ENCODE measurements at regions of chr1 and their contacts with region 1.

Region 1: GRCh38 chr1:87328272-87329050 is at the start of gene LMO4:
- DNase-seq: peak; percentile 98
- ATAC-seq: peak; percentile 81
- H3K4me3 ChIP-seq: peak within 1 kb of the TSS; percentile 82
- H3K27ac ChIP-seq: peak within 1 kb of the TSS; percentile 100
- H3K4me1 ChIP-seq: peaks cover 4% of the 10 kb centered on the region; the same call in 1 of the 2 replicates
- H3K27me3 ChIP-seq: no peaks in the 10 kb centered on the region
- CTCF ChIP-seq: no peak
- POLR2A ChIP-seq: peak; percentile 93
- RAD21 ChIP-seq: no peak
- total RNA-seq, gene LMO4: 85.8 and 98.9 TPM in 2 replicates

Region 2: DNA sequence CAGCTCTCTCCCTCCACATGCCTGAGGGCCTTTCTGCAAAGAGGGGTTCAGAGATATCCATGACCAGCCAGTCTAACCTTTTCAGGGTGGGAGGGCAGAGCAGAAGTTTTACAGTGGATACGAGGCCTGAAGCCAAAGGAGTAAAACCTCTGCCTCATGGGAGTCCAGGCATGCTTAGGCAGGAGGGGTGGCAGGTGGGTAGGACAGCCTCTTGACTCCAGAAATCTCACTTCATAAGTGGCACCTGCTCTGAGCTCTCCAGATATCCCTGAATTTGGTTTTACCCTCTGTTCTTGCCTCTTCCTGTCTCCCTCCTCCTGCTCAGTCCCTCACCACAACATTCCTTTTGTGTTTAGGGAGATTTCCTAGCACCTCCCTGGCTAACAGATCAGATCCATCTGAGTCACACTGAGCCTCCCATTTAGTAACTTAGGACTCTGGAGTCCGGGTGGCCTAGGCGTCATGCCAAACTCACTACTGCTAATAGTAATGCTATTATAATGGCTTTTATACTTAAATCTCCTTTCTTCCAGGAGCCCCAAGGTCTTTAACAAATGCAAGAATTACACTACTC is 213.1 kb before region 1 on chr1:
- CTCF ChIA-PET with region 1: no interaction called
- POLR2A ChIA-PET with region 1: no interaction called
- dilution Hi-C with region 1: no loop called
- in situ Hi-C with region 1: no loop called
- intact Hi-C with region 1: no loop called
- DNase-seq: peak; percentile 85
- ATAC-seq: peak; percentile 79
- H3K4me3 ChIP-seq: no peak overlapping the region
- H3K27ac ChIP-seq: no peak overlapping the region
- H3K4me1 ChIP-seq: peaks cover 8% of the 10 kb centered on the region
- H3K27me3 ChIP-seq: no peaks in the 10 kb centered on the region
- CTCF ChIP-seq: no peak
- POLR2A ChIP-seq: no peak
- RAD21 ChIP-seq: no peak

Region 3: GRCh38 chr1:87151500-87152421 is 176.7 kb before region 1 on chr1:
- CTCF ChIA-PET with region 1: interaction called, 3 read pairs
- POLR2A ChIA-PET with region 1: no interaction called
- dilution Hi-C with region 1: no loop called
- in situ Hi-C with region 1: loop called (anchors 5 kb)
- intact Hi-C with region 1: loop called (anchors 2 kb)
- DNase-seq: peak; percentile 58
- ATAC-seq: peak; percentile 93
- H3K4me3 ChIP-seq: peak overlapping the region; percentile 21; the same call in 1 of the 2 replicates
- H3K27ac ChIP-seq: peak overlapping the region; percentile 36
- H3K4me1 ChIP-seq: peaks cover 17% of the 10 kb centered on the region; the same call in 1 of the 2 replicates
- H3K27me3 ChIP-seq: peaks cover 2% of the 10 kb centered on the region; the same call in 1 of the 2 replicates
- CTCF ChIP-seq: peak; percentile 69
- POLR2A ChIP-seq: no peak
- RAD21 ChIP-seq: peak; percentile 77

Region 4: GRCh38 chr1:87279966-87280535 is 48.4 kb before region 1 on chr1:
- CTCF ChIA-PET with region 1: no interaction called
- POLR2A ChIA-PET with region 1: no interaction called
- dilution Hi-C with region 1: no loop called
- in situ Hi-C with region 1: no loop called
- intact Hi-C with region 1: no loop called
- DNase-seq: peak; percentile 16
- ATAC-seq: no peak
- H3K4me3 ChIP-seq: no peak overlapping the region
- H3K27ac ChIP-seq: no peak overlapping the region
- H3K4me1 ChIP-seq: peaks cover 5% of the 10 kb centered on the region
- H3K27me3 ChIP-seq: no peaks in the 10 kb centered on the region
- CTCF ChIP-seq: no peak
- POLR2A ChIP-seq: no peak
- RAD21 ChIP-seq: 0 out of 2 replicates have a peak, but pooled peaks have one; percentile 12

Region 5: DNA sequence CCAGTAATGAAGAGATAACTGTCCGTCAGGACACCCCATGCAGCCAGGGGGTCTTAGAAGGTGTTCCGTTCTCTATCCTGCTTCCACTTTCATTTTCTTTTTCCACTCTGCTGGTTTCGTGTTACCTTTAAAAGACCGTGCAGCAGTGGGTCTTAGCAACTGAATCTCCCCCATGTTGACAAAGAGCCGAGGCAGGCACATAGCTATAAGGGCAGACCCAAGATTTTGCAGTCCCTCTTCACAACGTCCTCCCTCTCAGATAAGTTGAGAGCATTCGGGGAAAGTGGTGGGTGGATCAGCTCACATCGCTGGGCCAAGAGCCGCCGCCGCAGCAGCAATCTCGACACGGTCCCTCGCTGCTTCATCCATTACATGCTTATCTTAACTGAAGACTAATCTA is 355.7 kb after region 1 on chr1:
- CTCF ChIA-PET with region 1: no interaction called
- POLR2A ChIA-PET with region 1: interaction called, 3 read pairs
- dilution Hi-C with region 1: no loop called
- in situ Hi-C with region 1: no loop called
- intact Hi-C with region 1: loop called (anchors 2 kb)
- DNase-seq: peak; percentile 57
- ATAC-seq: peak; percentile 56
- H3K4me3 ChIP-seq: peak overlapping the region; percentile 89
- H3K27ac ChIP-seq: peak overlapping the region; percentile 96
- H3K4me1 ChIP-seq: peaks cover 10% of the 10 kb centered on the region
- H3K27me3 ChIP-seq: no peaks in the 10 kb centered on the region
- CTCF ChIP-seq: no peak
- POLR2A ChIP-seq: no peak
- RAD21 ChIP-seq: no peak

Region 6: DNA sequence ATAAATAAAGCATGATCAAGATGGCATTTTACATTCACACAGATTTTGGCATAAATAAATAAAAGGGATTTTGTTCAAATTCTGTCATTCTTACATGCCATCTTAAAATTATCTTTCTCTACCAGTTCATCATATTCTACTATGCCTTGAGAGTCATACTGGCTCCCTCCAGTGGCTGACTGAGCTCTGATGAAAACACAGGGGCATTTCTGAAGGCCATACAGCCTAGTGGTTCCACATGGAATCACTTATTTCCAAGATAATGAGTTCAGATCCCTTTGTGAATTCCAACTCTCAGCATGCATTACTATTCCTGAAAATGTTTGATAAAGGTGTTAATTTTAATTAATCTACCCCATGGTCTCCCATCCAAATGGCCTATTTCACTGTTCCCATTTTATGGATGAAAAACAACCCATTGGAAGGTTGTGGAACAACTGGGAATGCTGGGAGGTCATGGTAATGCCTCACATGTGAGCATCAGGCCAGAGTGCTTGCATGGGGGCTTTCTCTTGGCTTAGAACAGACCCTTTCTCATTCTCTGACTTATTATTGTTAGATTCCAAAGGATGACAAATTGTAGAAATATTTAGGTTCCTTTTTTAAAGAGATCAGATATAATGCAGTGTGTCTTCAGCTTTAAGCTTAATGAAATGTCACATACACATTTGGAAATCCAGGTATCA is 733.2 kb after region 1 on chr1:
- CTCF ChIA-PET with region 1: interaction called, 4 read pairs
- POLR2A ChIA-PET with region 1: no interaction called
- dilution Hi-C with region 1: no loop called
- in situ Hi-C with region 1: no loop called
- intact Hi-C with region 1: loop called (anchors 1 kb)
- DNase-seq: peak; percentile 70
- ATAC-seq: peak; percentile 96
- H3K4me3 ChIP-seq: no peak overlapping the region
- H3K27ac ChIP-seq: no peak overlapping the region
- H3K4me1 ChIP-seq: no peaks in the 10 kb centered on the region
- H3K27me3 ChIP-seq: no peaks in the 10 kb centered on the region
- CTCF ChIP-seq: peak; percentile 96
- POLR2A ChIP-seq: no peak
- RAD21 ChIP-seq: peak; percentile 82

Region 7: DNA sequence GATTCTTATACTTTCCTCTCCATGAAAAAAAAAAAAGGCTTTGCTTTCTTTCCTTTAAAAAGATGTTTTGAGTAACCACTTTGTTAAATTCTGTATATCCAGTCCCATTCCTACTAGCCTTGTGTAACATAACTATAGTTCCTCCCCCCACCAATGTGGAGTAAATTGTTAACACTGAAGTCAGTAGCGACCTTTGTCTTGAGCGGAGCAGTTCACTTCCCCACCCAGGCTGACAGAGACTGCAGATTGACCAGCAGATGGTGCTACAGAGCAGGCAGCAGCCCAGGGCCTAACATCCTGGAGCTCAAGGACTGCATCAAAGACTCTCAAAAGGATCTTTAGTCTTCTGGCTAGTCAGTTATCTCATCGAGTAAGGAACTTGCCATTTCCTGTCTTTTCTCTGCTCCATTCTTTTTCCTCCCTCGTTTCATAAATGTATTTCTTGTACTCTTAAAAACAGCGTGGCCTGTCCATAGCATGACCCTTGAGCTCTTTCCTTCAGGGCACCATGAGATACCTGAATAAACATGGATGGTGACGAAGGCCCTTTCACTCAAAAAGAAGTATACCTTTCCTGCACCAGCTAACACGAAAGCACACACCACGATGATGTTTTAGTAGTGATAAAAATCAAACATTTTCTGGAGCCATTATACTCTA is 852.1 kb after region 1 on chr1:
- CTCF ChIA-PET with region 1: interaction called, 3 read pairs
- POLR2A ChIA-PET with region 1: no interaction called
- dilution Hi-C with region 1: no loop called
- in situ Hi-C with region 1: no loop called
- intact Hi-C with region 1: loop called (anchors 5 kb)
- DNase-seq: peak; percentile 79
- ATAC-seq: peak; percentile 100
- H3K4me3 ChIP-seq: no peak overlapping the region
- H3K27ac ChIP-seq: no peak overlapping the region
- H3K4me1 ChIP-seq: no peaks in the 10 kb centered on the region; the same call in 1 of the 2 replicates
- H3K27me3 ChIP-seq: no peaks in the 10 kb centered on the region
- CTCF ChIP-seq: peak; percentile 83
- POLR2A ChIP-seq: no peak
- RAD21 ChIP-seq: peak; percentile 76

Region 8: GRCh38 chr1:88595355-88596002 is 1267.0 kb after region 1 on chr1:
- CTCF ChIA-PET with region 1: no interaction called
- POLR2A ChIA-PET with region 1: no interaction called
- dilution Hi-C with region 1: no loop called
- in situ Hi-C with region 1: no loop called
- intact Hi-C with region 1: loop called (anchors 10 kb)
- DNase-seq: peak; percentile 57
- ATAC-seq: peak; percentile 68
- H3K4me3 ChIP-seq: no peak overlapping the region
- H3K27ac ChIP-seq: no peak overlapping the region
- H3K4me1 ChIP-seq: no peaks in the 10 kb centered on the region
- H3K27me3 ChIP-seq: no peaks in the 10 kb centered on the region
- CTCF ChIP-seq: peak; percentile 60
- POLR2A ChIP-seq: no peak
- RAD21 ChIP-seq: peak; percentile 64

Measured in IMR-90 (cell line).